ENCODE measurements at regions of chr4 and their contacts with region 1.

Region 1: DNA sequence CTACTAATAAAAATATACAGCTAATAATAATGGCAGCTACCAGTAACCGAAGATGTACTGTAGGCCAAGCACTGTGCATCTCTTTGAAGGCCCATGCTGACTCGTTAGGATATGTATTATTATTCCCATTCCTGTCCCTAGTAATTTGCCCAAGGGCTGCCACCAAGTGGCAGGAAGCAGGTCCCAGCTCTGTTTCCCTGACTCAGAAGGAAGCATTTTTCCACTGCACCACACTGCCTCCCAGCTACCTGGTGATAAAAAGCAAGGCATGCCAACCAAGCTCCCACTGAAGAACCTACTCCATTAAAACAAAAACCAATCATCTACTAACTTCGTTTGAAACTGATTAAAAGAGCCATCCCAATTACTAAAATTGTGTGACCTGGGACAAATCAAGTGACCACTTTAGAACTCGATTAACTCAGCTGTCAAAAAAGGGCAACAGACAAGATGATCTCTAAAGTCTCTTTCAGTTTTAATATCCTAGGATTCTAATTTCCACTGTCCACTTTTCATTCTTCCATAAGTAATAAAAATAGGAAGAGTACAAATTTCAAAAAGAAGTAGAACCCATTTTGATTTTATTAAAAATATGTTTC is 24.3 kb upstream of the PGM2 start:
- DNase-seq: no peak
- ATAC-seq: no peak
- H3K4me3 ChIP-seq: no peak overlapping the region
- H3K4me3 Mint-ChIP-seq: no peak overlapping the region
- H3K27ac ChIP-seq: no peak overlapping the region
- H3K27ac Mint-ChIP-seq: no peak overlapping the region
- H3K4me1 ChIP-seq: no peaks in the 10 kb centered on the region
- H3K4me1 Mint-ChIP-seq: peaks cover 0 to 2% (median 0%) of the 10 kb centered on the region in 7 donors
- H3K27me3 ChIP-seq: no peaks in the 10 kb centered on the region
- H3K27me3 Mint-ChIP-seq: peaks cover 0 to 20% (median 0%) of the 10 kb centered on the region in 5 donors

Region 2: GRCh38 chr4:37780444-37781150 is 21.6 kb before region 1 on chr4:
- CTCF ChIA-PET with region 1: interaction called, 3 read pairs
- POLR2A ChIA-PET with region 1: no interaction called
- intact Hi-C with region 1: loop called in 1 of 2 experiments (anchors 1 kb)
- DNase-seq: peak; percentile 20 to 90 (median 83)
- ATAC-seq: peak; percentile 96
- H3K4me3 ChIP-seq: peak overlapping the region; percentile 25
- H3K4me3 Mint-ChIP-seq: peak overlapping the region; percentile 19 to 84 (median 62)
- H3K27ac ChIP-seq: peak overlapping the region; percentile 59
- H3K27ac Mint-ChIP-seq: peak overlapping the region; percentile 32 to 96 (median 92)
- H3K4me1 ChIP-seq: peaks cover 12 to 27% of the 10 kb centered on the region in 2 donors
- H3K4me1 Mint-ChIP-seq: peaks cover 11 to 45% (median 28%) of the 10 kb centered on the region in 7 donors
- H3K27me3 ChIP-seq: no peaks in the 10 kb centered on the region
- H3K27me3 Mint-ChIP-seq: peaks cover 0 to 3% (median 0%) of the 10 kb centered on the region in 5 donors

Region 3: DNA sequence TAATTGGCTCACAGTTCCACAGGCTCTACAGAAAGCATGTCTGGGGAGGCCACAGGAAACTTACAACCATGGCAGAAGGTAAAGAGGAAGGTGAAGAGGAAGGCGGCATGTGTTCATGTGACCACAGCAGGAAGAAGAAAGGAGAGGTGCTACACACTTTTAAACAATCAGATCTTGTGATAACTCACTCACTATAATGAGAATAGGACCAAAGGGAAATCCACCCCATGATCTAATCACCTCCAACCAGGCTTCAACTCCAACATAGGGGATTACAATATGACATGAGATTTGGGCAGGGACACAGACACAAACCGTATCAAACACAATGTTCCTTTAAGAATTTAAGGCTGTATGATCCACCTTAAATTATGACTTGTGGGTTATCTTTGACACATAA is 13.8 kb after region 1 on chr4:
- CTCF ChIA-PET with region 1: interaction called, 3 read pairs
- POLR2A ChIA-PET with region 1: no interaction called
- intact Hi-C with region 1: loop called in 1 of 2 experiments (anchors 2 kb)
- DNase-seq: peak in 5 of 9 donors; percentile 8 to 39 (median 33)
- ATAC-seq: peak; percentile 68
- H3K4me3 ChIP-seq: no peak overlapping the region
- H3K4me3 Mint-ChIP-seq: peak overlapping the region; percentile 42 to 85 (median 72)
- H3K27ac ChIP-seq: peak overlapping the region; percentile 9
- H3K27ac Mint-ChIP-seq: peak overlapping the region; percentile 59 to 92 (median 87)
- H3K4me1 ChIP-seq: peaks cover 17 to 19% of the 10 kb centered on the region in 2 donors
- H3K4me1 Mint-ChIP-seq: peaks cover 15 to 29% (median 21%) of the 10 kb centered on the region in 7 donors
- H3K27me3 ChIP-seq: no peaks in the 10 kb centered on the region
- H3K27me3 Mint-ChIP-seq: peaks cover 0 to 3% (median 0%) of the 10 kb centered on the region in 5 donors

Region 4: GRCh38 chr4:37826295-37827029 is 24.3 kb after region 1 on chr4 and contains the start of gene PGM2:
- CTCF ChIA-PET with region 1: interaction called, 3 read pairs
- POLR2A ChIA-PET with region 1: interaction called, 6 read pairs
- intact Hi-C with region 1: loop called in 1 of 2 experiments (anchors 1 kb)
- DNase-seq: peak; percentile 84 to 94 (median 90)
- ATAC-seq: peak; percentile 99
- H3K4me3 ChIP-seq: peak within 1 kb of the TSS; percentile 79
- H3K4me3 Mint-ChIP-seq: peak within 1 kb of the TSS; percentile 93 to 100 (median 98)
- H3K27ac ChIP-seq: peak within 1 kb of the TSS; percentile 80
- H3K27ac Mint-ChIP-seq: peak within 1 kb of the TSS; percentile 92 to 99 (median 96)
- H3K4me1 ChIP-seq: peaks cover 7 to 11% of the 10 kb centered on the region in 2 donors
- H3K4me1 Mint-ChIP-seq: peaks cover 34 to 70% (median 55%) of the 10 kb centered on the region in 7 donors
- H3K27me3 ChIP-seq: no peaks in the 10 kb centered on the region
- H3K27me3 Mint-ChIP-seq: peaks cover 0 to 5% (median 0%) of the 10 kb centered on the region in 5 donors
- total RNA-seq, gene PGM2: 14.4 to 35.2 (median 18.7) TPM

Region 5: DNA sequence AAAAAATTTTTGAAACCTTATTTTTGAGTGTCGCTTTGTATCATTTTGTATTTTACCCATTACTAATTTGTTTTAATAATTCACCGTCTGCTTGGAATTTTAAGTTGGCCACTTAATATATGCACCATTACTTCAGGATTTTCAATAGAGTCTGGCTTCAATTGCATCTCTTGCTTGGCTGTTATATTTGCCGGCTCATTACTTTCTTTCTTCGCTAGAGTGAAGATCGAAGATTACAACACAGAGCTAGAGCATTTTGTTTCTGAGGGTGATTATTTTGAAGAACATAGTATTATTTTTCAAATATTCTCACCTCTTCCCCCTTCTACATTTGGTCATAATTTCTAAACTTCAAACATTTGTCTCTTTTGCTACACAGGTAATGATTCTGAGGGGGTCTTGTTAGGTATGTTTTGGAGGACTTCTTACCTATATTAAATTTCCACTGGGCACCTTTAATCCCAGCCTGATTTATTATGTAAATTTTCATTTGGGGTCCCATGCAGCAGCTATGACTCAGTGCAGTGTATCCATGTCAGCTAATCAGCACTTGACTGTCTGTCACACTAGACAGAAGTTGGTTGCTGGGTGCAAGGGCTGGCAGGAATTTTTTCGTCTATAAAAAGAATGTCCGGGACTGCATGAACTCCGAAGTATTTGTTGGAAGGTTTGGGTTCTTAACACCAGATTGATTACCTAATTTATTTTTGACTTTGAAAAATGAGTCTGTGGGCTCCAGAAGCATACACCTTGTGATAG is 107.3 kb after region 1 on chr4:
- CTCF ChIA-PET with region 1: no interaction called
- POLR2A ChIA-PET with region 1: no interaction called
- intact Hi-C with region 1: no loop called
- DNase-seq: no peak
- ATAC-seq: no peak
- H3K4me3 ChIP-seq: no peak overlapping the region
- H3K4me3 Mint-ChIP-seq: no peak overlapping the region
- H3K27ac ChIP-seq: no peak overlapping the region
- H3K27ac Mint-ChIP-seq: no peak overlapping the region
- H3K4me1 ChIP-seq: no peaks in the 10 kb centered on the region
- H3K4me1 Mint-ChIP-seq: peaks cover 6 to 72% (median 47%) of the 10 kb centered on the region in 7 donors
- H3K27me3 ChIP-seq: no peaks in the 10 kb centered on the region
- H3K27me3 Mint-ChIP-seq: no peaks in the 10 kb centered on the region

Region 6: GRCh38 chr4:37977471-37978247 is 175.5 kb after region 1 on chr4:
- CTCF ChIA-PET with region 1: interaction called, 7 read pairs
- POLR2A ChIA-PET with region 1: no interaction called
- intact Hi-C with region 1: loop called (anchors 1 kb)
- DNase-seq: peak; percentile 56 to 75 (median 70)
- ATAC-seq: peak; percentile 87
- H3K4me3 ChIP-seq: peak overlapping the region; percentile 69
- H3K4me3 Mint-ChIP-seq: peak overlapping the region; percentile 74 to 91 (median 84)
- H3K27ac ChIP-seq: peak overlapping the region; percentile 85
- H3K27ac Mint-ChIP-seq: peak overlapping the region; percentile 51 to 90 (median 78)
- H3K4me1 ChIP-seq: peaks cover 9 to 13% of the 10 kb centered on the region in 2 donors
- H3K4me1 Mint-ChIP-seq: peaks cover 14 to 40% (median 34%) of the 10 kb centered on the region in 7 donors
- H3K27me3 ChIP-seq: no peaks in the 10 kb centered on the region
- H3K27me3 Mint-ChIP-seq: no peaks in the 10 kb centered on the region

Region 7: DNA sequence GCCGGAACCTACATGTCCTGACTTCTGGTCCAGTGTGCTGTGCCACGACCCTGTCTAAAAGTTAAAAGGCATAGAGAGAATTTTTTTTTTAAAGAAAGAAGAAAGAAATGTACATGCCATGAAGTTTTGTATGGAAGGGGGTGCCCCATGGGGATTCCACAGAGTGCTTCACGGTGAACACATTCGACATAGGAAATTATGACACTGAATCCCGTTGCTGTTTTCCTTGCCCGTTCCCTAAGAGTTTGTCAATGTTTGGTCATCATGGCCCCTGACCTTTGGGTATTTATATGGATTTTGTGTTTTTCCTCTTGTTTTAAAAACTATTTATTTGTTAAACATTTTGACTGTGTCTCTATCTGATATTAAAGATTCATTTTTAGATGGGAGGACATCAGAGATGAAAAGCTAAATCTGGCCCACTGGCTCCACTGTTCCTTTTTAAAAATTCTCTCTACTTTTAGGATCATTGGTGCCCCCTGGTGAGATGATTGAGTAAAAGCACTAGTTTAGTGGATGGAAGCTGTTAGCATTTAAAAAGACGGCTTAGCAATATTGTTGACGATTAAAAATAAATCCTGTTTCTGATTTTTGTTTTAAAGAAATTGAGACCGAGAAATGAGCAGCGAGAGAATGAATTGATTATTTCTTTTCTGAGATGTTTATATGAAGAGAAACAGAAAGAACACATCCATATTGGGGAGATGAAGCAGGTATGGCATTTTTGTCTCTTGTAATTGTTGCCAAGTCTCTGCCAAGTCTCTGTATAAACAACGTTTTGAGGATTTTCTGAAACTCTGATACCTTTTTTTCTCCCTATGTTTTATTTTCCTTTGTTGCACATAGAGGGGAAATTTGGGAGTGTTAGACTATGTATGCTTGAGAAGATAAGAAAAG is 233.1 kb after region 1 on chr4:
- CTCF ChIA-PET with region 1: interaction called, 24 read pairs
- POLR2A ChIA-PET with region 1: no interaction called
- intact Hi-C with region 1: loop called (anchors 1 kb)
- DNase-seq: peak in 7 of 9 donors; percentile 29 to 66 (median 53)
- ATAC-seq: peak; percentile 68
- H3K4me3 ChIP-seq: no peak overlapping the region
- H3K4me3 Mint-ChIP-seq: no peak overlapping the region
- H3K27ac ChIP-seq: no peak overlapping the region
- H3K27ac Mint-ChIP-seq: no peak overlapping the region
- H3K4me1 ChIP-seq: no peaks in the 10 kb centered on the region
- H3K4me1 Mint-ChIP-seq: peaks cover 0 to 6% (median 0%) of the 10 kb centered on the region in 7 donors
- H3K27me3 ChIP-seq: no peaks in the 10 kb centered on the region
- H3K27me3 Mint-ChIP-seq: no peaks in the 10 kb centered on the region

Region 8: DNA sequence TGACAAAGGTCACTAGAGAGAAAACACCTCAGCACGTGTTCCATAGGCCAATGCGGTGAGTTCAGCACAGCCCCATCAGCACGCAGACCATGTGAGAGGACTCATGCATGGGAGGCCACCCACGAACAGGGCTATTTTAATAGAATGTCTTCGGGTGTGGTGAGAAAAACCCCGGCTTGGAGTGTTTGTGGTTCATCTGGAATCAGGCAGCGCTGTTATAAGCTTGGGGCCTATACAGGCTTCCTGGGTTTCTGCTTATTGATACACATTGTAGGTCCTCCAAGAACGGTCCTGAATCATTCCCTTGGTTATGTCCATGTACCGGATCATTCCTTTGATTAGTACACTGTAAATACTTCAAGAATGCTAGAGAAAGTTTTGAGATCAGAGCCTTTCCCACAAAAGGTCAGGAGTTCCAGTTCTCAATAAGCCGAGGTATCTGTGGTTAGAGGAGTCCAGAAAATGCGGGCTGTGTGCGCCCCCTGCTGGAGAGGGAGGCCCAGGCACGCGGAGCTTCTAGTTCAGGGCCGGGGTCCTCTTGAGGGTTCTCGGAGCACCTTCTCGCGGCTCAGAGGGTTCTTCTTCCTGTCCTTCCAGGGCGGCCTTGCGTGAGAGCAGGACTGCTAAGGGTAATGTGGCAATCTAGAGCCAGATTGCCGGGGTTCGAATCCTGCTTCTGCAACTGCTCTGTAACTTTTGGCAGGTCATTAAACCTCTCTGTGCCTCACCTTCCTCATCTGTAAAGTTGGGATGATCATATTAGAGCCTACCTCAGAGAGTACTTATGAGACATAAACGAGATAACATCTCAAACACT is 928.9 kb after region 1 on chr4:
- CTCF ChIA-PET with region 1: no interaction called
- POLR2A ChIA-PET with region 1: no interaction called
- intact Hi-C with region 1: loop called in 1 of 2 experiments (anchors 1 kb)
- DNase-seq: peak; percentile 63 to 86 (median 77)
- ATAC-seq: peak; percentile 88
- H3K4me3 ChIP-seq: no peak overlapping the region
- H3K4me3 Mint-ChIP-seq: no peak overlapping the region
- H3K27ac ChIP-seq: no peak overlapping the region
- H3K27ac Mint-ChIP-seq: peak overlapping the region in 2 of 9 donors; percentile 25 to 31
- H3K4me1 ChIP-seq: peaks cover 0 to 7% of the 10 kb centered on the region in 2 donors
- H3K4me1 Mint-ChIP-seq: peaks cover 7 to 20% (median 16%) of the 10 kb centered on the region in 7 donors
- H3K27me3 ChIP-seq: no peaks in the 10 kb centered on the region
- H3K27me3 Mint-ChIP-seq: peaks cover 0 to 12% (median 0%) of the 10 kb centered on the region in 5 donors

Measured in naive thymus-derived CD4-positive, alpha-beta T cell (primary cell).